ENCODE measurements at regions of chr4 and their contacts with region 1.

Region 1: GRCh38 chr4:139651282-139652194 is 14.1 kb upstream of the MGST2 start:
- DNase-seq: peak; percentile 79
- ATAC-seq: peak; percentile 88
- H3K4me3 Mint-ChIP-seq: no peak overlapping the region
- H3K27ac Mint-ChIP-seq: no peak overlapping the region
- H3K4me1 Mint-ChIP-seq: peaks cover 5% of the 10 kb centered on the region
- H3K27me3 Mint-ChIP-seq: peaks cover 3% of the 10 kb centered on the region

Region 2: DNA sequence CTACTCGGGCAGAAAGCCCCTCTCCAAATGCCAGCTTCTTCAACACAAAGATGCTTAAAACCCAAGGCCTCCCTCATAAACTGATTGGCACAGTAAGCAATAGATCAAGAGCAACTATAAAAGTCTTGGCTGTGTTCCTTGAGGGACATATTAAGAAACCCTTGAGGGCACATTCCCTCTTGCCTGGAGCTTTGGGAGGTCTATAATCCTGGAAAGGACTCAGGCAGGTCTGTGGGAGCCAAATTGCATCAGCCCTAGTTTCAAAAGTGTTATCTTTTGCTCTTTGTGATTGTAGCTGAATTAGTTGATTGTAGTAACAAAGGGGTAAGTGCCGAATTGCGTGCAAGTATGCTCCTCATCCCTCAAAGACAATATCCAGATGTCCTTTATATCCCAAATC is 76.9 kb before region 1 on chr4:
- CTCF ChIA-PET with region 1: no interaction called
- POLR2A ChIA-PET with region 1: no interaction called
- DNase-seq: no peak
- ATAC-seq: no peak
- H3K4me3 Mint-ChIP-seq: no peak overlapping the region
- H3K27ac Mint-ChIP-seq: no peak overlapping the region
- H3K4me1 Mint-ChIP-seq: peaks cover 1% of the 10 kb centered on the region
- H3K27me3 Mint-ChIP-seq: peaks cover 11% of the 10 kb centered on the region

Region 3: DNA sequence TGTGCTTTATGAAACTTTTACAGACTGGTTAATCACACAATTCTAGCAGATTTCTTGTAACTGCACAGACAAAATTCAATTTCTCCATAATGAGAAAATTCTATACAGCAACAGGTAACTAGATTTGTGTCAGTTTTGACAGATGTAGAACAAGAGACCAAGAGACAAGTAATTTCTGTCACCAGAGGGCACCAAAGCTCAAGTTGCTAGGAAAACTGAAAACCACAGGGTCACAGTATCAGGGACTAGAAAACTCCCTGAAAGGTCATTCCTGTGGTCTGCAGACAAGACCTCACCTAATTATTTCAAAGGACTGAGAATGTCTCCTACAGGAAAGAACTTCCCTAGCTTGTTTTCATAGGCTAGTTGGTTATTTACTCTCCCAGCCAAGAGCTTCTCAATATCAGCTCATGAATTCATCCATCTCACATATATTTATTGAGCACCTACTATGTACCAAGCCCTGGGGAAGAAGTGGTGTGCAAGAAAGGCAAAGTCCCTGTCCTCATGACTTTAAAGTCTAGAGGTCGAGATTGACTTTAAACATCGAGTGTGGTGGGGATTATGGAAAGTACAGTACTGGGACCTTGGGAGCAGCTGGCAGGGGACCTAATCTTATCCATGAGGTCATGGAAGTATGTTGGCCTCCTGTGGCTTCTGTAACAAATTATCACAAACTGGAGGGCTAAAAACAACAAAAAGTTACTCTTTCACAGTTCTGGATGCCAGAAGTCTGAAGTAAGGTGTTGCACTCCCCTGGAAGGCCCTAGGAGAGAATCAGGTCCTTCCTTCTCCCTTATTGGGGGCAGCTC is 47.8 kb before region 1 on chr4:
- CTCF ChIA-PET with region 1: interaction called, 113 read pairs
- POLR2A ChIA-PET with region 1: no interaction called
- DNase-seq: peak; percentile 56
- ATAC-seq: peak; percentile 50
- H3K4me3 Mint-ChIP-seq: no peak overlapping the region
- H3K27ac Mint-ChIP-seq: no peak overlapping the region
- H3K4me1 Mint-ChIP-seq: peaks cover 21% of the 10 kb centered on the region
- H3K27me3 Mint-ChIP-seq: peaks cover 5% of the 10 kb centered on the region

Region 4: GRCh38 chr4:139619644-139620043 is 31.9 kb before region 1 on chr4:
- CTCF ChIA-PET with region 1: interaction called, 18 read pairs
- POLR2A ChIA-PET with region 1: no interaction called
- DNase-seq: peak; percentile 31
- ATAC-seq: peak; percentile 72
- H3K4me3 Mint-ChIP-seq: no peak overlapping the region
- H3K27ac Mint-ChIP-seq: no peak overlapping the region
- H3K4me1 Mint-ChIP-seq: no peaks in the 10 kb centered on the region
- H3K27me3 Mint-ChIP-seq: no peaks in the 10 kb centered on the region

Region 5: GRCh38 chr4:139665690-139666529 is 14.4 kb after region 1 on chr4 and contains the start of gene MGST2:
- CTCF ChIA-PET with region 1: interaction called, 43 read pairs
- POLR2A ChIA-PET with region 1: interaction called, 12 read pairs
- DNase-seq: peak; percentile 34
- ATAC-seq: peak; percentile 71
- H3K4me3 Mint-ChIP-seq: peak within 1 kb of the TSS; percentile 88
- H3K27ac Mint-ChIP-seq: peak within 1 kb of the TSS; percentile 96
- H3K4me1 Mint-ChIP-seq: peaks cover 32% of the 10 kb centered on the region
- H3K27me3 Mint-ChIP-seq: no peaks in the 10 kb centered on the region
- total RNA-seq, gene MGST2: 12.8 to 13.4 TPM

Region 6: GRCh38 chr4:139768896-139769295 is 117.4 kb after region 1 on chr4:
- CTCF ChIA-PET with region 1: no interaction called
- POLR2A ChIA-PET with region 1: no interaction called
- DNase-seq: no peak
- ATAC-seq: no peak
- H3K4me3 Mint-ChIP-seq: no peak overlapping the region
- H3K27ac Mint-ChIP-seq: no peak overlapping the region
- H3K4me1 Mint-ChIP-seq: no peaks in the 10 kb centered on the region
- H3K27me3 Mint-ChIP-seq: no peaks in the 10 kb centered on the region

Measured in activated CD8-positive, alpha-beta T cell treated with anti-CD3 and anti-CD28 coated beads, Interleukin-2, amount 10 ng/mL, durations not matched to agents 7 days and 5 days (primary cell).